ENCODE measurements at regions of chr15 and their contacts with region 1.

Region 1: DNA sequence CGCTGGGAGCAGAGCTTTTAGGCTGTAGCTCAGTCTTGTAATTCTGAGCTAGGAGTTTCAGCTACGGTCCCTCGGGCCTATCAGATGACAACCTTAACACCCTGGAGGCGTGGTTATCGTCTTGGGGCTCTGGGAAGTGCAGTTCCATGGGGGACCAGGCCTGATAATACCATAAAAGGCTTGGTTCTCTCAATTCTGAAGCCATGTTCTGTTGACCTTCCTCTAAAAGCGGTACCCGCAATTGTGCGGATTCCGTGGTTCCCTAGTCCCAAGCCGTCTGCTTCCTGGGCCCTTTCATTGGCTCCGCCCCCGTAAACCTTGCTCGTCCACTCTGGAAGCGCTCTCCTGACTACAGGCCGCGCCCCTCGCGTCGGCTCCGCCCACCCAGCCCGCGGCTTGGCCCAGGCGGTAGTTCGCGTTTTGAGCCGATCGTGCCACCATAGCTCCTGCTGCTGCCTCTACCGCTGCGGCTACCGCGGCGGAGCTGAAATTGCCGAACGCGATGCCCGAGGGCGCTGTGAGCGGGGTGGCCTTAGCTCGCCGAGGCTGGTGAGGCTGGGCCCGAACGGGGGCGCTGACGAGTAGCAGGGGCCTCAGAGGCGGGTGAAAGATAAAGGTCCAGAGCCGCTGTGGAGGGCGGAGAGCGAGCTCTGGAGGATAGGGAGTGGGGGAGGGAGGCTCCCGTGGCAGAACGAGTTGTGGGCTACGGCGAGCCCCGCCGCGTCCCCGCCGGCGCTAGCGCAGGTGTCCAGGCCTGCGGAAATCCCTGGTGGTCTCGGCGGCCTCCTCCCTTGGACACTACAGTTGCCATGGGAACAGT is at the start of gene MAPKBP1:
- DNase-seq: peak; percentile 98
- H3K4me3 ChIP-seq: peak within 1 kb of the TSS; percentile 79 to 92
- H3K27ac ChIP-seq: peak within 1 kb of the TSS; percentile 85 to 87
- H3K4me1 ChIP-seq: peaks cover 51% of the 10 kb centered on the region
- H3K27me3 ChIP-seq: no peaks in the 10 kb centered on the region
- CTCF ChIP-seq: peak; percentile 60 to 72 (median 66)
- POLR2A ChIP-seq: no peak
- total RNA-seq, gene MAPKBP1: 156 to 159 TPM

Region 2: GRCh38 chr15:41727143-41727542 is 47.1 kb before region 1 on chr15:
- intact Hi-C with region 1: no loop called
- DNase-seq: no peak
- H3K4me3 ChIP-seq: no peak overlapping the region
- H3K27ac ChIP-seq: no peak overlapping the region
- H3K4me1 ChIP-seq: no peaks in the 10 kb centered on the region
- H3K27me3 ChIP-seq: no peaks in the 10 kb centered on the region
- CTCF ChIP-seq: no peak
- POLR2A ChIP-seq: no peak

Region 3: GRCh38 chr15:41811432-41812195 is 37.3 kb after region 1 on chr15:
- intact Hi-C with region 1: loop called (anchors 5 kb)
- DNase-seq: peak; percentile 90
- H3K4me3 ChIP-seq: no peak overlapping the region
- H3K27ac ChIP-seq: no peak overlapping the region
- H3K4me1 ChIP-seq: peaks cover 8% of the 10 kb centered on the region
- H3K27me3 ChIP-seq: no peaks in the 10 kb centered on the region
- CTCF ChIP-seq: peak; percentile 79 to 88 (median 87)
- POLR2A ChIP-seq: no peak

Measured in testis (tissue), 5 donors.